ENCODE measurements at regions of chr4 and their contacts with region 1.

Region 1: DNA sequence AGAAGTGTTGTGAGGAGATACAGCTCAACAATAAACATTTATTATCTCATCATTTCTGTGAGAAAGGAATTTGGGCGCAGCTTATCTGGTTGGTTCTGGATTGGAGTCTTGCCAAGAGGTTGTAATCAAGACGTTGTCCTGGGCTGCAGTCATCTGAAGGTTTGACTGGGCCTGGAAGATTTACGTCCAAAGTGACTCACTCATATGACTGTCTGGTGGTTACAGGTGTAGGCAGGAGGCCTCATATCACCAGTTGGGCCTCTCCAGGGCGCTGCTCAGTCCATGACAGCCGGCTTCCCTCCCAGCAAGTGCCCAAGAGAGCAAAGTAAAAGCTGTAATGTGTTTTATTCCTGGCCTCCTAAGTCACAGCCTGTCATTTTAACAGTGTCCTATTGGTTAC is 106.3 kb downstream of the USP46 start:
- DNase-seq: peak; percentile 28
- ATAC-seq: no peak
- H3K4me3 ChIP-seq: no peak overlapping the region
- H3K27ac ChIP-seq: no peak overlapping the region
- H3K4me1 ChIP-seq: no peaks in the 10 kb centered on the region
- H3K27me3 ChIP-seq: peaks cover 17% of the 10 kb centered on the region; the same call in 1 of the 2 replicates
- CTCF ChIP-seq: no peak

Region 2: DNA sequence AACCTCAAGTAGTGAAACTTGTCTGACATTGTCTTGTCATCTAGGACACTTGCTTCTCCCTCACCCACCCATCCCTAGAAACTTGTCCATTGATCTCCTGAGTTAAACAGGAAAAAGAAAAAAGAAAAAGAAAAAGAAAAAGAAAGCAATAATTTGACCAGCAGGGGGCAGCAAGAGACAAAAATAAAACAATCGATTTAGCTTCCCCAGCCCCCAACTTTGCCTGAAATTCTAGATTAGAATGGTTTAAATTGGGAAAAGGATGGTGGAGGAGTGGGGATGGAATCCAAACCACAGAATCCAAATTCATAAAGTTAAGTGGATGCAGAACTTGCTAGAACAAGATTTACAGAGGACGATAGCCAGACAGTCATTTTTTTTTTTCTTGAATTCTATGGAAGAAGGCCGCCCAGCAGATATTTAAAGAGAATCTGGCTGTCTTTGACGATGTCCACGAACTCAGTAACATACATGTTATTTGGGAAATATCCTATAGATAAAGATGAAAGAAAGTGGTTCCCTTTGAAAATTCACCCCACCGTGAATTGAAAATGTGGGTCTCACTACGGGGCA is 176.6 kb before region 1 on chr4:
- CTCF ChIA-PET with region 1: no interaction called
- POLR2A ChIA-PET with region 1: no interaction called
- intact Hi-C with region 1: loop called (anchors 2 kb)
- DNase-seq: peak; percentile 77
- ATAC-seq: no peak; the same call in 1 of the 2 replicates
- H3K4me3 ChIP-seq: no peak overlapping the region
- H3K27ac ChIP-seq: no peak overlapping the region
- H3K4me1 ChIP-seq: peaks cover 11% of the 10 kb centered on the region
- H3K27me3 ChIP-seq: peaks cover 24% of the 10 kb centered on the region
- CTCF ChIP-seq: peak; percentile 88